WTC11 (cell line): ENCODE measurements at regions of chr5 and their contacts with region 1.

Region 1: GRCh38 chr5:142108432-142109330 is at the start of gene NDFIP1:
- DNase-seq: peak; percentile 84
- ATAC-seq: peak; percentile 97
- H3K4me3 Mint-ChIP-seq: peak within 1 kb of the TSS; percentile 81
- H3K27ac Mint-ChIP-seq: peak within 1 kb of the TSS; percentile 69
- H3K4me1 Mint-ChIP-seq: peaks cover 24% of the 10 kb centered on the region
- H3K27me3 Mint-ChIP-seq: peaks cover 15% of the 10 kb centered on the region
- CTCF ChIP-seq: no peak
- total RNA-seq, gene NDFIP1: 26.4 to 27.6 TPM (median 26.6 TPM) in 3 replicates

Region 2: GRCh38 chr5:142048272-142048671 is 60.4 kb before region 1 on chr5:
- CTCF ChIA-PET with region 1: interaction called, 10 read pairs
- POLR2A ChIA-PET with region 1: no interaction called
- DNase-seq: peak; percentile 36
- ATAC-seq: peak; percentile 85
- H3K4me3 Mint-ChIP-seq: no peak overlapping the region
- H3K27ac Mint-ChIP-seq: peak overlapping the region; percentile 58
- H3K4me1 Mint-ChIP-seq: peaks cover 18% of the 10 kb centered on the region
- H3K27me3 Mint-ChIP-seq: 0 out of 2 replicates have a peak, but pooled peaks cover 4% of the 10 kb centered on the region
- CTCF ChIP-seq: no peak

Region 3: DNA sequence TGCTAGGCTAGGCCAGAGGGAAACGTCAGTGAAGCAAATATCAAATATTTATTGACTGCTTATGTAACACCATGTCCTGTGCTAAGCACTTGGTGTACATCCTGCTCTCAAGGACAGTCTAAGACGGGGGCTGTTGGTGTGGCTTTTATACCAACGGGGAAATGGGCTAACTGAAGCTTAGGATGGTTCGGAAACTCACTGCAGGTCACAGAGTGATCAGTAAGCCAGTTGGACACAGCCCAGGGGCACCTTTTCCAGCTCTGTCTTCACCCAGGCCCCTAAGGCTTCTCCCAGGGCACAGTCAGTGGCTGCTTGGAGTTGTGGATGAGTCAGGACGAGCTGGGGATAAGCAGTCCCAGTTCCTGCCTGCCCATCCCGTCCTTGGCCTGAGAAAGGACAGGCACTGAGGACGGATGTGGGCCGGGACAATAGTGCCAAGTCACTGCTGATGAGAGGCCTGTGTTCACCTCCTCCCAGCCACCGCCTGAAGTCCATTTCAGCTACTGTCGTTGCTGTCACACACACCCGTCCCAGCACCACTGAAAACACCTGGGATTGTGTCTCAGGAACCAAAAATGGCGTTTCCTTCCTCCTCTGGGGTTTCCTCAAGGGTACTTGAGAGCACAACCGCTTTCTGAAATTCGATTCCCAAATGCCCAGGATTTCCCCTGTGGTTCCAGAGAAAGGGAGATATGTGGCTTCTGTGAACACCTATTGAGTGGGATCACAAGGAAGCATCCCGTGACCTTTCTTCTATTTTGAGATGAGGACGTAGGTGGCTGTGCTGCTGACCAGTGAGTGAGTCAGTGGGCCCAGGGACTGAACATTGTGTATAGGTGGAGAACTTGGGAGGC is 233.7 kb after region 1 on chr5:
- CTCF ChIA-PET with region 1: no interaction called
- POLR2A ChIA-PET with region 1: no interaction called
- DNase-seq: no peak
- ATAC-seq: peak; percentile 34
- H3K4me3 Mint-ChIP-seq: no peak overlapping the region
- H3K27ac Mint-ChIP-seq: no peak overlapping the region; the same call in 1 of the 2 replicates
- H3K4me1 Mint-ChIP-seq: peaks cover 23% of the 10 kb centered on the region
- H3K27me3 Mint-ChIP-seq: no peaks in the 10 kb centered on the region; the same call in 1 of the 2 replicates
- CTCF ChIP-seq: no peak